Activated CD4-positive, alpha-beta T cell treated with anti-CD3 and anti-CD28 coated beads for 36 hours (primary cell): ENCODE measurements at regions of chr7 and their contacts with region 1.

Region 1: DNA sequence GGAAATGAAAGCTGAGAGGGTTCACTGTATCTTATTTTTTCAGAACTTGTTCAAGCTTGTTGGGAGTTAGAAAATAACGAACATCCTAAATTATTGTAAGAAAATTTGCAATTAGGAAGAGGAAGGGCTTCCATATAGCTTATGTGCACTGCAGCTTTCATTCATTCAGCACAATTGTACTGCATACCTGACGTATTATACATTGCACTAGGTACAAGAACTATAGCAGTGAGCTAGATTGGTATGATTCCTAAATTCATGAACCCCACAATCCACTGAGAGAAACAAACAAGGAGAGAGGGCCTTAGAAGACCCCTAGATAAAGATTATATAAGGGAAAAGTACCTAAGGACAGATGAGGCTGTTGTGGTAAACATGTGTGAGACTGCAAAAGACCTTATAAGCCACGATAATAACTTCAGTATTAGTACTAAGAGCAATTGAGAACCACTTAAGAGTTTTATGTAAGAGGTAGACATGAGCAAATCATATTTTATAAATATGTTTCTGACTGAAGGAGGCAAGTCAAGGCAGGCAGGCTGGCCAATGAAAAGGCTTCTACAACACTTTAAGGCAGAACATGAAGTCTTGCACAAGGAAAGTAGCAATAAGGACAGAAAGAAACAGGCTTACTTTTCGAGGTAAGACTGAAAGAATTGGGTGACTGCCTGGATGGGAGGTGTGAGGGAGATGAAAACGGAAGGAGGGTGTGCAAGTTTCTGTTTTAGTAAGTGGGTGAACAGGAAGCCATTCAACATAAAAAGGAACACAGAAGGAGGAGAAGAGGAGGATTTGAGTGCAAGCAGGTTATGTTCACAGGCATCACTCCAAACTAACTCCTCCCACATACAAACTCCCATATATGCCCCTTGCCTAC is 77.9 kb upstream of the LRRN3 start:
- DNase-seq: peak; percentile 57
- ATAC-seq: peak; percentile 81
- H3K4me3 Mint-ChIP-seq: peak overlapping the region; percentile 53
- H3K27ac Mint-ChIP-seq: peak overlapping the region; percentile 85
- H3K4me1 Mint-ChIP-seq: peaks cover 70% of the 10 kb centered on the region
- H3K27me3 Mint-ChIP-seq: no peaks in the 10 kb centered on the region

Region 2: DNA sequence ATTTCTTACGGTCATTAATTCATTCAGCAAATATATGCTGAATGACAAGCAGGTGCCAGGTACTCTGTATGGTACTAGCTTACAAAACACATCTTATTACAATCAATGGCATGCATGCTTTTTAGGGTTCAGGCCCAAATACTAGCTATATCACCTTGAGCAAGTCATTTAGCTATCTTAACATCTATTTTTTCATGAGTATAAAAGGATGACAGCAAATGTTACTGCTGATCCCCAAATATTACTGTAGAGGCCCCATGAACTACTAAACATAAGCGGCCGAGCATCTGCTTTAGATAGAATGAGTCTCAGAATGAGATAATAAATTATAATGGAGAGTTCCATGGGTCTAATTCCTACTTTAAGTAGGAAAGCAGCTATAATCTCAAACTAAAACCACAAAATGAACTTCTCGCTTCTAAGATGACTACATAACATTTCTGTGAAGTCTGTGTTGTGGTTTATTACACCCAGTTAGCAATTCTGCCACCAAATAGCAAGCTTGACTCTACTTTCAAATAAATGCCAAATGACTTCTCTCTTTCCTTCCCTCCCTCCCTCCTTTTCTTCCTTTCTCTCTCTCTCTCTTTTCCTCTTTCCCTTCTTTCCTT is 35.8 kb before region 1 on chr7:
- CTCF ChIA-PET with region 1: no interaction called
- POLR2A ChIA-PET with region 1: no interaction called
- intact Hi-C with region 1: loop called (anchors 2 to 5 kb)
- DNase-seq: no peak
- ATAC-seq: peak; percentile 76
- H3K4me3 Mint-ChIP-seq: no peak overlapping the region
- H3K27ac Mint-ChIP-seq: no peak overlapping the region
- H3K4me1 Mint-ChIP-seq: peaks cover 28% of the 10 kb centered on the region
- H3K27me3 Mint-ChIP-seq: peaks cover 2% of the 10 kb centered on the region

Region 3: GRCh38 chr7:111083413-111083812 is 70.4 kb after region 1 on chr7:
- CTCF ChIA-PET with region 1: no interaction called
- POLR2A ChIA-PET with region 1: no interaction called
- intact Hi-C with region 1: loop called (anchors 1 kb)
- DNase-seq: peak; percentile 60
- ATAC-seq: peak; percentile 84
- H3K4me3 Mint-ChIP-seq: peak overlapping the region; percentile 49
- H3K27ac Mint-ChIP-seq: peak overlapping the region; percentile 89
- H3K4me1 Mint-ChIP-seq: peaks cover 78% of the 10 kb centered on the region
- H3K27me3 Mint-ChIP-seq: no peaks in the 10 kb centered on the region

Region 4: DNA sequence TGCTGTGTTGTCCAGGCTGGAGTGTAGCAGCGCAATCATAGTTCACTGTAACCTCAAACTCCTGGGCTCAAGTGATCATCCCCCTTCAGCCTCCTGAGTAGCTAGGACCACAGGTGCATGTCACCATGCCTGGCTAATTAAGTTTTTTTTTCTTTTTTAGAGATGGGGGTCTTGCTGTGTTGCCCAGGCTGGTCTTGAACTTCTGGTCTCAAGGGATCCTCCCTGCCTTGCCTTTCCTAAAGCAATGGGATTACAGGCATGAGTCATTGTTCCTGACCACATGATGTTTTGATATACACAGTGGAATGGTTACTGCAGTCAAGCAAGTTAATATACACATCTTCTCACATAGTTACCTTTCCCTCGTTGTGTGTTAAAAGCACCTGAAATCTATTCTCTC is 1933.3 kb after region 1 on chr7:
- CTCF ChIA-PET with region 1: no interaction called
- POLR2A ChIA-PET with region 1: no interaction called
- intact Hi-C with region 1: no loop called
- DNase-seq: no peak
- ATAC-seq: no peak
- H3K4me3 Mint-ChIP-seq: no peak overlapping the region
- H3K27ac Mint-ChIP-seq: no peak overlapping the region
- H3K4me1 Mint-ChIP-seq: no peaks in the 10 kb centered on the region
- H3K27me3 Mint-ChIP-seq: peaks cover 35% of the 10 kb centered on the region